Dorsolateral prefrontal cortex (tissue), 120 donors: ENCODE measurements at regions of chr1 and their contacts with region 1.

Region 1: GRCh38 chr1:215526553-215527151 is 40.5 kb upstream of the KCTD3 start:
- DNase-seq: no peak
- H3K4me3 ChIP-seq: peak overlapping the region in 1 of 59 donors; percentile 6
- H3K27ac ChIP-seq: no peak overlapping the region
- H3K27me3 ChIP-seq: peaks cover 0 to 13% (median 0%) of the 10 kb centered on the region in 45 donors
- CTCF ChIP-seq: peak; percentile 71 to 97 (median 86)

Region 2: DNA sequence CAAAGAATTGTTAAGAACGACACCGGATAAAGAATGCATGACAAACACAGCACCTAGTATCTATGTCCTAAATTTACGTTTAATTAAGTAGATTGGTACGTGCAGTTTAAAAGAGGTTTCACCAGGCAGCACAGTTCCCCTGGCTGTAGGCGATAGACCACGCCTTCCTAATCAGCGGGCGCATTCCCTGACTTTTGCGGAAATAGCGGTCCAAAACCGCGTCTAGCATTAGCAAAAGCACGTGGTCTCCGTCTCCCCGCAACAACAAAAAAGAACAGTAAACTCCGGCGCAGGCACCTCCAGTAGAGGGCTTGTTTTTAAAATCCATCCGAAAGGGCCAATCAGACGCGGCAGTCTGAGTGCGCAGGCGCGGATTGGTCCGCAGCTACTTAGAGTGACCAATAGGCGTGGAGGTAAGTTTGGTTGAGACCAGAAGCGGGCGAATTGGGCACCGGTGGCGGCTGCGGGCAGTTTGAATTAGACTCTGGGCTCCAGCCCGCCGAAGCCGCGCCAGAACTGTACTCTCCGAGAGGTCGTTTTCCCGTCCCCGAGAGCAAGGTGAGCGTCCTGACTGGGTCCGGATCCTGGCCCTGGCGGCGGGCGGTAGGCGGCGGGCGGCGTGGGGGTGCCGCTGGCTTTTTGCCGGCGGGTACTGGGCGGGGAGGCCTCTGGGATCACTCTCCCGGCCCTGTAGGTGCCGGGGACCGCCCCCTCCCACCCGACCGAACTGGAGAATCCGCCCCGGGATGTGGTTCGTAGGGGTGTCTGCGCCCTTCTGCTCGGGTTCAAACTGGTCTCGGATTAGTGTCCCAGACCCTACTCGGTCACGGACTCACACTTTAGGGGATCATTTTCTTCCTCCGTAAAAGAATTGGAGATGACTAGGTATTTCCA is 923.6 kb before region 1 on chr1 and contains the start of gene CENPF:
- intact Hi-C with region 1: no loop called
- DNase-seq: peak; percentile 73 to 99 (median 95)
- H3K4me3 ChIP-seq: peak within 1 kb of the TSS; percentile 49 to 94 (median 83)
- H3K27ac ChIP-seq: no peak within 1 kb of the TSS
- H3K27me3 ChIP-seq: no peaks in the 10 kb centered on the region
- CTCF ChIP-seq: peak in 52 of 56 donors; percentile 22 to 72 (median 52)
- total RNA-seq, gene CENPF: 0.35 to 6.5 (median 1.9) TPM

Region 3: GRCh38 chr1:214623430-214623829 is 903.2 kb before region 1 on chr1:
- intact Hi-C with region 1: loop called in 1 of 2 experiments (anchors 10 kb)
- DNase-seq: no peak
- H3K4me3 ChIP-seq: no peak overlapping the region
- H3K27ac ChIP-seq: no peak overlapping the region
- H3K27me3 ChIP-seq: no peaks in the 10 kb centered on the region
- CTCF ChIP-seq: no peak

Region 4: DNA sequence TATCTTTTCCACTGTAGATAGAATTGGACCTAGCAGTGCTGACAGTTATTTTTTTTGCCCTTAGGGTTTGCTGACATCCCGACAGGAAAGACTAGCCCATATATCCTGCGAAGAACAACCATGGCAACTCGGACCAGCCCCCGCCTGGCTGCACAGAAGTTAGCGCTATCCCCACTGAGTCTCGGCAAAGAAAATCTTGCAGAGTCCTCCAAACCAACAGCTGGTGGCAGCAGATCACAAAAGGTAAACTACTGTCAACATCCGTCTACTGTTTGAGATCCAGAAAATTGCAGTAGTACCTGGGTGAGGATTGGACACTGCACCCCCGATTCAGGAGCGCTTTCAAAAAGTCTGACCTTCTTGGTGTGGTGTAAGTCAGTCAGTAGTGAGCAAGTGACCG is 867.9 kb before region 1 on chr1:
- intact Hi-C with region 1: loop called (anchors 2 to 5 kb)
- DNase-seq: peak in 2 of 10 donors; percentile 7 to 19
- H3K4me3 ChIP-seq: no peak overlapping the region
- H3K27ac ChIP-seq: no peak overlapping the region
- H3K27me3 ChIP-seq: no peaks in the 10 kb centered on the region
- CTCF ChIP-seq: peak in 38 of 56 donors; percentile 9 to 63 (median 35)